ENCODE measurements at regions of chr14 and their contacts with region 1.

Region 1: GRCh38 chr14:24431569-24432258 is 2.0 kb downstream of the KHNYN start:
- DNase-seq: peak; percentile 84
- H3K4me3 ChIP-seq: peak overlapping the region in 2 of 3 experiments; percentile 64 to 75
- H3K27ac ChIP-seq: peak overlapping the region; percentile 73
- H3K4me1 ChIP-seq: peaks cover 35% of the 10 kb centered on the region
- H3K27me3 ChIP-seq: no peaks in the 10 kb centered on the region
- CTCF ChIP-seq: peak; percentile 98

Region 2: DNA sequence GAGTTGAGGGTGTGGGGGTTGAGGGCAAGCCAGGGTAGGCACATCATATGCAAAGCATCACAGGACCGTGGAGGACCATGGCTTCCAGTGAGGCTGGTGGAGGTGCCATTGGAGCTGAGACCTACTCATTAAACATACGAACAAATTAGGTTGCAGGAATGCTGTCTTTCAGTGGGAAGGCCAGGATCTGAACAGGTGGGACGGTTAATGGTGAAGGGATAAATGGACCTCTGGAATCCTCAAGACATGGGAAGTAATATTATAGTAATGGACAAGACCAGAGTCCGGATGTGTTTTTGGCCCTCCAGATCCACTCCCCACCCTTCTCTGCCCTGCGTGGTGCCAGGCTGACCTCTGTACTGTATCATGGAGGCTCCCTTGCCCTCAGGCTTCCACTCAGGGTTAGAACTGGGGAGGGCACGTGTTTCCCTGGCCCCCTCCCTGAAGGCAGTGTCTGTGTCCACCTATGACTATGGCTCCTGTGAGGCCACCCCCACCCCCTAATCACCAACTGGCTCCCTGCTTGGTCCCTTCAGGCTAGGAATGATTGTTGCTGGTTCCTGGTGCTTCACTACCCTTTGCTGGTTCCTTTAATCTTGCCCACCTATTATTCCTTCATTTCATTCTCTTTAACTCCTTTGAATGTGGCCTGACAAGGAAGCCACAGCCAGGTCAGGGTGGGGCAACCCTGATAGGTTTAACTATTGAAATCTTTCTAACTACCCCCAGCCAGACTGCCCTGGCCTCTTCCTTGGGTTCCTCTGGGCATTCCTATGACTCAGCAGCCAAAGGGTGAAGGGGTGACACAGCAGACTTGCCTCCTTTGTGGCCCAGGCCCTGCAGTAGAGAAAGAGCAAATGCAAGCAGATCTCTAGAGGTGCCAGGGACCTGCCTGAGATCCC is 784.8 kb before region 1 on chr14:
- CTCF ChIA-PET with region 1: no interaction called
- dilution Hi-C with region 1: no loop called
- in situ Hi-C with region 1: no loop called
- intact Hi-C with region 1: no loop called
- DNase-seq: peak; percentile 54
- H3K4me3 ChIP-seq: no peak overlapping the region
- H3K27ac ChIP-seq: no peak overlapping the region
- H3K4me1 ChIP-seq: no peaks in the 10 kb centered on the region
- H3K27me3 ChIP-seq: no peaks in the 10 kb centered on the region
- CTCF ChIP-seq: no peak

Region 3: DNA sequence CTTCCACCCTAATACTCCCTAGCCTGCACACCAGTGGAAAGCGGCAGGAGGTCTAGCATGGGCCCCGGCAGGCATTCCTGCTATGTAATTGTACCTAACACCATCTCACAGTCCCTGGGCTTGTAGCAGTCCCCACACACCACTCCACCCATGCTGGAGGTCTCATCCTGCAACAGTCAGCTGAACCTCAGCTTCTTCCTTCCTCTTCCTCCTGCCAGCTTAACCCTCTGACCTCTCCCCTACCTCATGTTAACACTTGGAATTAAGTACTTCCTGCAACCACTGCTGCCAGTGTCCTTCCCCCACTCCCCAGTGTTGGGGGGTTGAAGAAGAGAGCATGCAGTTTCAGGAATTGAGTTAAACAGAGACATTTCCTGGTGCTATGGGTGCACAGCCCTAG is 104.4 kb before region 1 on chr14:
- CTCF ChIA-PET with region 1: interaction called, 18 read pairs
- dilution Hi-C with region 1: no loop called
- in situ Hi-C with region 1: loop called (anchors 5 kb)
- intact Hi-C with region 1: no loop called
- DNase-seq: no peak
- H3K4me3 ChIP-seq: no peak overlapping the region
- H3K27ac ChIP-seq: no peak overlapping the region
- H3K4me1 ChIP-seq: peaks cover 3% of the 10 kb centered on the region
- H3K27me3 ChIP-seq: no peaks in the 10 kb centered on the region
- CTCF ChIP-seq: no peak

Region 4: DNA sequence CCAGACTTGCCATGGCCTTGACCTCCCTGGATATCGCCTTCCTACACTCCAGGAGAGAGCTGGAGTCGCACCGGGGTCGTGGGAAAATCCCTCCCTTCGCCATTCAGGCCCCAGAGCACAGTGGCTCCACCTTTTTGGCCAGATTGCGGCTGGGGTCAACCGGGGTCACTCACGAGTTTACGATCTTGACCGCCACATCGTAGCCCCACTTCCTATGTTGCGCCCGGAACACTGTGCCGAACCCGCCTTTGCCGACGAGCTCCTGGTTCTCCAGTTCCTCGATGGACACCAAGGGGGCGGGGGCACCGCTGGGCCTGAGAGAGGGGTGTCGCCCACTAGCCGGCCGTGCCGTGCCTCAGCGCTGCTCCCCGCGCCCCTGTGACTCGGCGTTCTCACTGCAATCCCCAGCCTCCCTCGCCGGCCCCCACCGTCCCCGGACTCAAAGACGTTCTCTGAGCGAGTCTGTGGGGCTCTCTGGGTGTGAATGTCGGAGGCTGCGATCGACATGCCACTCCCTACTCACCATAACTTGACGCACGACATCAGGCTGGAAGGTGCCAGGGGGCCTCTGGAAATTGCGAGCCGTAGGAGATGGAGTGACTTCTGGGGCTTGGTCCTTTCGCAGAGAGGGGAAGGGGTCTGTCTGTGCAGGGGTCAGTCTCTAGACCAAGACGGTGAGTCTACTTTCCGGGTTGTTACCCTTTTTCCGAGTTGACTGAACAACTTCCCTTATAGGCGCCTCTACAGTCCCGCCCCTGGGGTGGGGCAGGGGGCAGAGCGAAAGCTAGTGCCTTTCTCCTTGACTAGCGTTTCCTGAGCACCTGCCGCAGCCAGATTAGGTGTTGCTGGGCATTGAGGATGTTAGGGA is 92.2 kb before region 1 on chr14 and contains the start of gene RIPK3:
- CTCF ChIA-PET with region 1: interaction called, 31 read pairs
- dilution Hi-C with region 1: loop called (anchors 5 kb)
- in situ Hi-C with region 1: loop called (anchors 5 kb)
- intact Hi-C with region 1: no loop called
- DNase-seq: no peak
- H3K4me3 ChIP-seq: no peak within 1 kb of the TSS
- H3K27ac ChIP-seq: no peak within 1 kb of the TSS
- H3K4me1 ChIP-seq: peaks cover 5% of the 10 kb centered on the region
- H3K27me3 ChIP-seq: peaks cover 11% of the 10 kb centered on the region
- CTCF ChIP-seq: no peak
- total RNA-seq, gene RIPK3: under 0.01 to 0.61 TPM

Region 5: DNA sequence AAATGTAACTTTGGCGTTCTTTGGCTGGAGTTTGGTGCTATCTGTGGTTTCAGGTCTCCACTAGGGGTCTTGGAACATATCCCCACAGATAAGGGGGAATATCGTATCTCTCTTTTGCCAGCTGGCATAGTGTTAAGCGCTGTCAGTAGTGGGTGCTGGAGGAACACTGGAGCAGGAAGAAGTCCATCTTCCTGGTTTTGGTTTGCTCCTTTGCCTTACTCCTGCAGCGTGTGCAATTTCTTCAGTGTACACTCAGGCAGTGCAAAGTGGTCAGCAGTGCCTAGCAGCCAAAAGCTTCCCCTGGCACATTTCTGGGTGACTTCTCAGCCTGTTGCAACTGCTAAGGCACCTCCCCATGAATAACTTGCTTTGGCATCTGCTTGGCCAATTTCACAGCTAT is 80.2 kb before region 1 on chr14:
- CTCF ChIA-PET with region 1: interaction called, 11 read pairs
- dilution Hi-C with region 1: no loop called
- in situ Hi-C with region 1: no loop called
- intact Hi-C with region 1: no loop called
- DNase-seq: peak; percentile 43
- H3K4me3 ChIP-seq: no peak overlapping the region
- H3K27ac ChIP-seq: no peak overlapping the region
- H3K4me1 ChIP-seq: peaks cover 2% of the 10 kb centered on the region
- H3K27me3 ChIP-seq: no peaks in the 10 kb centered on the region
- CTCF ChIP-seq: no peak

Region 6: DNA sequence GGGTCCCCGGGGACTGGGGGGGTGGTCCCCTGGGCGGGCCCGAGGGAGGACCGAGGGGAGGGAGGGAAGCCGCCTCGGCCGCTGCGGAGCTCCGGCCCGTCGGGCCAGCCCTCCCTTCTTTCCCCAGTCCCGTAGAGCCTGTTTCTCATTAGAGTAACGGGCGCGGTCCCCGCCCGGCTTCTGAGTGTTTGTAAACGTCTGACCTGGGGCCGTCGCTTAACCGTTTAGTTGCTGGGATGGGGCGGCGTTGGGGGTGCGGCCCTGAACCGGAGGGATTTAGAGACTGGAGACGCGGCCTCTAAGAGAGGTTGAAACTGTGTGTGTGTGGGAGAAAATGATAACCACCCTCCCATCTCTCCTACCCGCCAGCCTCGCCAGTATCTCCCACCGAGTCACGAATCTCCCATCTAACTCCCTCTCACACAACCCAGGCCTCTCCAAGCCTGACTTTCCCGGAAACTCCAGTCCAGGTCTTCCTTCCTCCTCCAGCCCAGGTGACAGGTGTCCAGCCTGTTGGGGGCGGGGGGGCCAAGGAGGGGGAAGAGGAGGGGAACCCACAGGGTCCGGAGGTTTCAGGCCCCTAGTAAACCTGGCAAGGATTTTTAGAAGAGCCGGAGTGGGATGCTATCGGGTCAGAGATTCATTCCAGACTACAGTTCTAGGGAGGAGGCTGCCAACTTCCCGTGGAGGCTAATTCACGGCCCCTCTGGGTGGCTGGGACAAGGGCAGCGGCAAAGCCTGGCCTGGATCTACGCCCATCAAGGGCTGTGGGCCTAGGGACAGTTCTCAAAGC is 64.8 kb before region 1 on chr14:
- CTCF ChIA-PET with region 1: interaction called, 9 read pairs
- dilution Hi-C with region 1: loop called (anchors 10 kb)
- in situ Hi-C with region 1: loop called in 1 of 2 experiments (anchors 5 kb)
- intact Hi-C with region 1: loop called (anchors 1 kb)
- DNase-seq: peak; percentile 75
- H3K4me3 ChIP-seq: peak overlapping the region; percentile 45 to 56 (median 46)
- H3K27ac ChIP-seq: no peak overlapping the region
- H3K4me1 ChIP-seq: peaks cover 27% of the 10 kb centered on the region
- H3K27me3 ChIP-seq: no peaks in the 10 kb centered on the region
- CTCF ChIP-seq: no peak

Region 7: DNA sequence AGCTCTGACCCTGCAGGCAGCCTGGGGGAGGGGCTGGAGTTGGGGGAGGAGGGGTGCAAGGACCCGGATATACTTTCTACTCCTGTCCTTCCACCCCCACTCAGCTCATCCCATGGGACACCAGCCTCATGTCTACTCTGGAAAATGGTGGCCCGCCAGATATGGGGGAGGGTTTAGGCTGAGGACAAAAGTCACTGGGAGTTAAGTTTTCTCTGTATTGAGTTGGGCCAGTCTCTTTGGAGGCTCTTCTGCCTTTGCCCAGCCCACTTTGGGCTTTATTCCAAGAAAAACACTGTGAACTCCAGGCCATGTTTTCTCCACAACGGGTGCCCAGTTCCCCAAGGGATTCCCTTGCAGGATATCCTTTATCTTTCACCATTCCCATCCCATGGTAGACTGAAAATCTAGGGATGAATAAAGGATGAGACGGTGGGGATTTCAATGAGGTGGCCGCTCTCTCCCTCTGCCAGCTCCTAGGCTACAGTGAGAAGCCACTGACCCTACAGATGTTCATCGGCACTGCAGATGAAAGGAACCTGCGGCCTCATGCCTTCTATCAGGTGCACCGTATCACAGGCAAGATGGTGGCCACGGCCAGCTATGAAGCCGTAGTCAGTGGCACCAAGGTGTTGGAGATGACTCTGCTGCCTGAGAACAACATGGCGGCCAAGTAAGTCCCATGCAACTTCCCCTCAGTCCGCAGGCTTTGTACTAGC is 58.9 kb before region 1 on chr14:
- CTCF ChIA-PET with region 1: no interaction called
- dilution Hi-C with region 1: loop called (anchors 10 kb)
- in situ Hi-C with region 1: loop called in 1 of 2 experiments (anchors 5 kb)
- intact Hi-C with region 1: no loop called
- DNase-seq: no peak
- H3K4me3 ChIP-seq: no peak overlapping the region
- H3K27ac ChIP-seq: no peak overlapping the region
- H3K4me1 ChIP-seq: peaks cover 4% of the 10 kb centered on the region
- H3K27me3 ChIP-seq: no peaks in the 10 kb centered on the region
- CTCF ChIP-seq: no peak

Region 8: DNA sequence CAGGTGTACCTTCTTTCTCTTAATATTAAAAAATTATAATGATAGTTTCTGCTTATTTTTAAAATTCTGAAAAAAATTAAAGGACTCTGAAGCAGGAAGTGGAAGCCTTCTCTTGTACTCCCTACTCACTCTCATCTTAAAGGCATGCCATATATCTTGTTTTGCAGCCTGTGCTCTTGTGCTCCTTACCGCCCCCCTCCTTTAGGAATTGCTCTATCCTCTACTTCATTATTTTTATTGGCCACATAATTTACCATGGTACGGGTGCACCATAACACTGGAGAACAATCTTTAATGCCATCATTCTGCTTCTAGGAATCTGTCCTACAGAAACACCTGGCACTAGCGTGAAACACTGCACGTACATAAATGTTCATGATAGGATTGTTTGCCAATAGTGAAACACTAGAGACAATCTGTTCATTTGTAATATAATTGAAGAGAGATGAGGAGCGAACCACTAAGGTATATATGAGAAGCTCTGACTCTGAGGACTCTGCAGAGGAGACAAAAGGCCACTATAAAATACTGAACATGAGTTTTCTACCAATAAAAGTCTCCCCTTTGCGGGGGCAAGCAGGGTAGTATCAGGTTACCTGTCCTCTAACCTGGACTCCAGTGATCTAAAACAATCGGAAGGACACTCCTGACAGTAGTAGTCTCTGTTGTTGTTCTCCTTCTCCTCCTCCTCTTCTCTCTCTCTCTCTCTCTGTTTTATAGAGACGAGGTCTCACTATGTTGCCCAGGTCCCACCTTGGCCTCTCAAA is 39.2 kb before region 1 on chr14:
- CTCF ChIA-PET with region 1: interaction called, 4 read pairs
- dilution Hi-C with region 1: no loop called
- in situ Hi-C with region 1: no loop called
- intact Hi-C with region 1: loop called (anchors 1 kb)
- DNase-seq: peak; percentile 73
- H3K4me3 ChIP-seq: no peak overlapping the region
- H3K27ac ChIP-seq: peak overlapping the region; percentile 67
- H3K4me1 ChIP-seq: peaks cover 28% of the 10 kb centered on the region
- H3K27me3 ChIP-seq: no peaks in the 10 kb centered on the region
- CTCF ChIP-seq: peak; percentile 28 to 47

Region 9: DNA sequence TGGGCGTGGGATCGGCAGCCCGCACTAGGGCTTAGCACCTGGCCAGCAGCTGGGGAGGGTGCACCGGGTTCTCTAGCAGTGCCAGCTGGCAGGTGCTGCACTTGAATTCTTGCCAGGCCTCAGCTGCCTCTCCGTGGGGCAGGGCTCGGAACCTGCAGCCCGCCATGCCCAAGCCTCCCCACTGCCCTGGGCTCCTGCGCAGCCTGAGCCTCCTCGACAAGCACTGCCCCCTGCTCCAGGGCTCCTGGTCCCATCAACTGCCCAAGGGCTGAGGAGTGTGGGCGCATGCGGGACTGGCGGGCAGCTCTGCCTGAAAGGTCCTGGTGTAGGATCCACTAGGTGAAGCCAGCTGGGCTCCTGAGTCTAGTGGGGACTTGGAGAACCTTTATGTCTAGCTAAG is 41.5 kb after region 1 on chr14:
- CTCF ChIA-PET with region 1: no interaction called
- dilution Hi-C with region 1: no loop called
- in situ Hi-C with region 1: no loop called
- intact Hi-C with region 1: no loop called
- DNase-seq: no peak
- H3K4me3 ChIP-seq: no peak overlapping the region
- H3K27ac ChIP-seq: no peak overlapping the region
- H3K4me1 ChIP-seq: no peaks in the 10 kb centered on the region
- H3K27me3 ChIP-seq: no peaks in the 10 kb centered on the region
- CTCF ChIP-seq: no peak

Measured in mammary epithelial cell (primary cell).